MCF 10A (cell line): ENCODE measurements at regions of chr12 and their contacts with region 1.

Region 1: GRCh38 chr12:71694099-71694820 is 8.4 kb downstream of the TMEM19 start:
- DNase-seq: no peak
- H3K4me3 Mint-ChIP-seq: no peak overlapping the region
- H3K27ac Mint-ChIP-seq: peak overlapping the region; percentile 79
- H3K4me1 Mint-ChIP-seq: peaks cover 24% of the 10 kb centered on the region
- H3K27me3 Mint-ChIP-seq: no peaks in the 10 kb centered on the region
- CTCF ChIP-seq: no peak

Region 2: DNA sequence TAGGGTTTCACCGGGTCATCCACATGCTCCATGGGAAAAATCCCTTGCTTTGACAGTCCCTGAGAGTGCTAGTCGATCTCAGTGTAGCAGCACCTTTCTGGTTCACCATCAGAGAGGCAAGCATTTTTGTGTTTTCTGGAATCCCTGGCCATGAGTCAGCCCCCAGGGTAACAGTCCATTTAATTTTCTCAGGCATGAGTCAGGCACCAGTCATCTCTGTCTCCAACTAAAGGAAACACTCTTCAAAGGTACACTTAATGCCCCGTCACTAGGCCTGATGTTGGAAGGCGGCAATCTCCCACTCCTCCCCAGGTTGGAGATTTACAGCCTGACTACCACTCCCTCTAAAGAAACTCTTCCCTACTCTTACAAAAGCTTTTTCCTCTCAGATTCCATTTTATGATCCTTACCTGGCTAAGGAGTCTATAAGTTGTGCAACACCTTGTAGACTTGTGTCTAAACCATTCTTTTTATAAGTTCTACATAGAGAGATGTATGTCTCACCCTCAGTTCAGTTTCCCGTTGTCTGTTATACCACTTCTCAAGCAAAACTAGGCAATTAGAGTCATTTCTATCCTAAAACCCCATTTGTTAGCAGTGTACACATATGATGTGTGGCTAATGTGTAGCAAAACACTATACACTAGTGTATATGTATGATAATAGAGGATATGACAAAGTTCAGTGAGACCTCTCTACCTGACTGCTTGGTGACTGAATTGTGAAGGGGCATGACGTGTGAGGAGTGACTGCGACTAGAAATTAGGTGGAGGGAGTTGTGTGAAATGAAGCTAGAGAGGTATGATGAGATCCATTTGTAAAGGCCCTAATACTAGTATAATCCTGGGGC is 16.2 kb after region 1 on chr12:
- CTCF ChIA-PET with region 1: interaction called, 4 read pairs
- POLR2A ChIA-PET with region 1: interaction called, 10 read pairs
- intact Hi-C with region 1: no loop called
- DNase-seq: peak; percentile 95
- H3K4me3 Mint-ChIP-seq: peak overlapping the region; percentile 2
- H3K27ac Mint-ChIP-seq: peak overlapping the region; percentile 91
- H3K4me1 Mint-ChIP-seq: peaks cover 16% of the 10 kb centered on the region
- H3K27me3 Mint-ChIP-seq: no peaks in the 10 kb centered on the region
- CTCF ChIP-seq: no peak